Aorta (tissue), 5 donors: ENCODE measurements at regions of chr17 and their contacts with region 1.

Region 1: GRCh38 chr17:49670002-49670401 is 7.9 kb downstream of the SPOP start:
- DNase-seq: no peak
- ATAC-seq: no peak
- H3K4me3 ChIP-seq: no peak overlapping the region
- H3K27ac ChIP-seq: no peak overlapping the region
- H3K4me1 ChIP-seq: peaks cover 1 to 7% of the 10 kb centered on the region in 2 donors
- H3K27me3 ChIP-seq: no peaks in the 10 kb centered on the region

Region 2: GRCh38 chr17:49469831-49470810 is 199.9 kb before region 1 on chr17:
- intact Hi-C with region 1: no loop called
- DNase-seq: no peak
- ATAC-seq: no peak
- H3K4me3 ChIP-seq: no peak overlapping the region
- H3K27ac ChIP-seq: no peak overlapping the region
- H3K4me1 ChIP-seq: no peaks in the 10 kb centered on the region
- H3K27me3 ChIP-seq: no peaks in the 10 kb centered on the region

Region 3: DNA sequence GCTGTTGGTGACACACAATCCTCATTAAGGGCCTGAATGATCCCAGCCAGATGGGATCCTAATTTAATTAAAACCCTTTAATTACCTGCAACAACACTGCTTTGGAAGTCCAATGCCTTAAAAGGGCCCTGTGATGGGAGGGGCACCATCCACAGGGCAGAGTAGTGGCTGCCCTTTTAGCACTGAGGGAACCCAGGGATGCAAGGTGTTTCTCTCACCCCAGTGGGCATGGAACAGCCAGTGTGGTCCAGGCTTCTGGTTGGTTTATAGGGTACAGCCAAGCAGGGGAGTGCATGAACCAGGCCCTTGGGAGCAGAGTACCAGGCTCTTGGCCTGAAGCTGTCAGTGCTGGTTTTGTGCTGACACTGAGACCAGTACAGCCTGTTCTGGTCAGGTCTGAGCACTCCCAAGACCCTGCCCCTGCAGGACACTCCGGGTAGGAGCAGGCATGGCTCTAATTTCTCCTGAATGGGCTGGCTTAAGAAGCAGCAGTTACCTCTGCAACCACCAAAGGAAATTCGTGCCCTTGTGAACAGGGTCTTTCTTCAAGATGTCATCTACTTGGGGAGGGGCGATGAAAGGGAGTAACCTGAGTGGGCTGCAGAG is 84.5 kb before region 1 on chr17:
- intact Hi-C with region 1: no loop called
- DNase-seq: no peak
- ATAC-seq: no peak
- H3K4me3 ChIP-seq: no peak overlapping the region
- H3K27ac ChIP-seq: peak overlapping the region in 1 of 2 donors; percentile 33
- H3K4me1 ChIP-seq: peaks cover 2 to 4% of the 10 kb centered on the region in 2 donors
- H3K27me3 ChIP-seq: no peaks in the 10 kb centered on the region

Region 4: DNA sequence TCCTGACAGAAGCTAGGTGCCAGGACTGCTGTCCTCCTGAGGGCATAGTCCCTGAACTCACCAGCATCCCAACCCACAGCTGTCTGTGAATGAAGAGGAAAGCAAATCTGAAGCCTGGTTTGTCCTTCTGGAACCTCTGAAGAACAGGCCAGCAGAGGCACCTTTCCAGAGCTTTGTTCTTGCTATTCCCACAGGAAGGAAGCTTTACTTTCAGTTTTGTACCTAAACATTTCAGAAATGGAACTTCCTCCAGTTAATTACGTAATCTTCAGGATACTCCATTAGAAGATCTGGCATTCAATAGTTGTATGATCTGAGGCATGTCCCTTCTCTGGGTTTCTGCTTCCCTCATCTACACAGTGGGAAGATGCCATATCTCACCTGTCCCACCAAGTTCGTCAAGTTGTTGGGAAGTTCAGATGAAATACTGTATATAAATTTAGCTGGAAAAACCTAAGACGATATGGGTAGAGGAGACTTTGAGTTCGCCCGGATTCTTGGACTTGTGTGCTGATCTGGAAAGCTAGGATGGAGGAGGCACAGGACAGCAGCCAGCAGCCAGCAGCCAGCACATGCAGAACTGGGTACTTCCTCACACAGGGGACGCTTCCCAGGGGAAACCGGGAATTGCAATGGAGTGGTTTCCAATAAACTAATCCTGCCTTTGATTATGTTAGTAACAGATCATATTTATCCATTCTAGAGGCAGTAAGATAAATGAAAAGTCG is 71.9 kb before region 1 on chr17:
- intact Hi-C with region 1: loop called in 1 of 2 experiments (anchors 5 kb)
- DNase-seq: no peak
- ATAC-seq: no peak
- H3K4me3 ChIP-seq: no peak overlapping the region
- H3K27ac ChIP-seq: peak overlapping the region in 1 of 2 donors; percentile 41
- H3K4me1 ChIP-seq: no peaks in the 10 kb centered on the region
- H3K27me3 ChIP-seq: no peaks in the 10 kb centered on the region

Region 5: DNA sequence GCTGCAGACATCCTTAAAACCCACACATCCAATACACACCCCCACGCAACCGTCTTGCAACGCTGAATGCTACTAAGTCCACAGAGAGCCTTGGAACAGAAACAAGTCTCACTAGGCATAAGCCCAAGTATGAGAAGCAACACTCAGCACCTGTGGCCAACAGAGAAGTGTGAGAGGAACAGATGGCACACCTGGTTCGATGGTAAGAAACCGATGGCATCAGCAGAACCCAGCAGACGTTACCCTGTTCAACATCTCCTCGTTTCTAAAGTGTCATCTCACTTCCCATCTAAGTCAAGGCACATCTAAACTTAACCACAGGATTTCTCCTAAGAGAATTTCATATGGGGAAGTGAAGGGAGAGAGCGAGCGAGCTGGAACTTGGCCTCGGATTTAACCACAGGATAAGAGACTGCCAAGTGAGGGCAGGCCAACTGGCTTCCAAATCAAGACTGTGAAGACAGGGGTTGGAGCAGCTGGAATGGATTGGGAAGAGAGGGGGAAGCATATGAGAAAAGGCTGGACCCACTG is 53.3 kb before region 1 on chr17:
- intact Hi-C with region 1: loop called in 1 of 2 experiments (anchors 5 kb)
- DNase-seq: peak; percentile 82 to 86
- ATAC-seq: peak; percentile 84
- H3K4me3 ChIP-seq: no peak overlapping the region
- H3K27ac ChIP-seq: peak overlapping the region; percentile 39 to 95
- H3K4me1 ChIP-seq: peaks cover 5 to 6% of the 10 kb centered on the region in 2 donors
- H3K27me3 ChIP-seq: no peaks in the 10 kb centered on the region

Region 6: DNA sequence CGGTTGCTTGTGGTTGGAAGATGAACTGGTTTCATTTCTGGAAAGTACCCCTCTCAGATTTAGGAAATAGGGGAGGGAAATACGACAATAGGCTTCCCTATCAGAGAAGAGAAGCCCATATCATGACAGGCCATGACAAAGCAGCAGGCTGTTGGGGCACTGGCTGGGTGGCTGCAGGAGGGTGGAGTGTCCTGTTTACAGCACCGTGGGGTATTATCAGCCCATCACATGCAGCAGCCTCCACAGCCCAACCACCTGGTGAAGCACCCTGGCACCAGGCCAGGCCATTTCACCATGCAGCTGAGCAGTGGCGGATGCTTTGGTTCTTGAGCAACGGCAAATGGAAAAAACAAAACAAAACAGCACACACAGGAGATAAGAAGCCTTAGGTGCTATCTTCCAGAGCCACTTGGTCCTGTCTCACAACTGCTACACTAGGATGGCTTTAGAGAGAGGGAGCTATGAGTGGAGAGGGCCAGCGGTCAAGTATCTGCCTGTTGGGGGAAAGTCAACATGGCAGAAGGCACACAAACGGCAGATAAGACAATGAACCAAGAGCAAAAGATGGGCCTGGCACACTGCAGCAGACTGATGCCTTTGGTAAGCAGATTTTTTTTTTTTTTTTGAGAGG is 69.8 kb after region 1 on chr17:
- intact Hi-C with region 1: no loop called
- DNase-seq: peak; percentile 83 to 90
- ATAC-seq: peak; percentile 61
- H3K4me3 ChIP-seq: no peak overlapping the region
- H3K27ac ChIP-seq: peak overlapping the region in 1 of 2 donors; percentile 47
- H3K4me1 ChIP-seq: peaks cover 3 to 4% of the 10 kb centered on the region in 2 donors
- H3K27me3 ChIP-seq: no peaks in the 10 kb centered on the region